Activated CD8-positive, alpha-beta T cell treated with anti-CD3 and anti-CD28 coated beads, Interleukin-2, amount 10 ng/mL, durations not matched to agents 7 days and 5 days (primary cell): ENCODE measurements at regions of chrX and their contacts with region 1.

Region 1: DNA sequence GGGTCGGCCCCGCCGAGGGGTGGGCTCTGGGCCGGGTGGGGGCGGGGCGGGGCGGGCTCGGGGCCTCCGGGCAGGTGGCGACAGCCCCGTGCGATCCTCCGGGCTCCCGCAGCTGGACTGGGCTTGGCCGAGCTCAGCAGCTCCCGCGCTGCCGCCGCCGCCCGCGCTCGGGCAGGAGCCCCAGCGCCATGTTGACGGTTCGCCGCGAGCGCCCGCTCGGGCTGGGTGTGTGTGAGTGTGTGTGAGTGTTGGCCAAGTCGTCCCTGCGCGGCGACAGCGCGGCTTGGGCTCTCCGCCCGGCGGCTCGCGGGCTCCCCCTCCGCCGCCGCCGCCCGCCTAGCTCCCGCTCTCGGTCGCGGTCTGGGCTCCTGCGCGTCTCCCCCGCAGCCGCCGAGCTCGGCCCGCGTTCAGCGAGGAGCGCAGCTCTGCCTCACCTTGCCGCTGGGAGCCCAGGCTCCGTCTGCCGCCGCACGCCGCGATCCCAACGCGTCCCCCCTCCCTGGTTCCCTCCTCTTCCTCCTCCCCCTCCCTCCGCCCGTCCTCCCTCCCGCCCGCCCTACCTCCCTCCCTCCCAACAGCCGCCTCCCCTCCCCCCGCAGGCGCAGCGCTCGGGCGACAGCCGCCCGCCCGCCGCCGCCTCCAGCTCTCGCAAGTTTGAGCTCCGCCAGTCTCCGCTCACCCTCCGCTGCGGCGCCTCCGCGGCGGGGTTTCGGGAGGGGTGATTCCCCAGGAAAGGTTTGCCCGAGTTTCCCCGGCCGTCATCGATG is at the start of gene BCOR:
- DNase-seq: peak; percentile 84
- ATAC-seq: peak; percentile 45
- H3K4me3 Mint-ChIP-seq: peak within 1 kb of the TSS; percentile 92
- H3K27ac Mint-ChIP-seq: peak within 1 kb of the TSS; percentile 92
- H3K4me1 Mint-ChIP-seq: peaks cover 22% of the 10 kb centered on the region
- H3K27me3 Mint-ChIP-seq: no peaks in the 10 kb centered on the region
- total RNA-seq, gene BCOR: 41.5 to 45.5 TPM

Region 2: DNA sequence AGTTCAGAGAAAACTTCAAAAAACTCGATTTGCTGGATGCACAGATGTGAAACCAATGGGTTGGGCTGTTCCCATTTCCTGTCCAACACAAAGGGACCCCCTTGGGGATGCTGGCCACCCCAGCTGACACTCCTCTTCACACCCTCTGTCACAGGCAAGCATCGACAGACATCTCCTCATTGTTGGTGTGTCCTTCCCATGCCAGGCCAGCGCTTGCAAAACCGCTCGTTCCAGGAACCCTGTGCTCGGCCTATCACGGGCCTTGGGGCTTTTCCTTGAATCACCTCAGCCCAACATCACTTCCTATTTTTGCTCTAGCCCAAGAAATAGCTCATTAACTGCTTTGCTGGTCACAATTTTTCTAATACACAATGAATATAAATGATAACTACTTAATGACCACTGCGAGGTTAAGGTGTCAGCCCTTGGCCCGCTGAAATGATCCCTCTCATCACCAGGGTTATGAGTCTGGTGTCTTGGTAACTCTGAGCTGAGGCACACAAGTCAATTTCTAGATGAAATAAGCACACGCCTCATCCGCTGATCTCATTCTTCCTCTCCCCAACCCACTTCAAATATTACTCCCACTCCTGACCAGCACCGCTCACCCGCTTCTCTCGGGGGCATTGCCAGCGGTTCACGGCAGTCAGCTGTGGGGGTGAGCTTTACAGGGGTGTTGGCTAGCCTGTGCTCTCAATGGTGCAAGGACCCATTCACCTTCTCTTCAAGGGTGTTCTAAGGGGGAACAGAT is 32.2 kb before region 1 on chrX:
- CTCF ChIA-PET with region 1: no interaction called
- POLR2A ChIA-PET with region 1: interaction called, 11 read pairs
- DNase-seq: peak; percentile 50
- ATAC-seq: peak; percentile 71
- H3K4me3 Mint-ChIP-seq: peak overlapping the region; percentile 62
- H3K27ac Mint-ChIP-seq: peak overlapping the region; percentile 90
- H3K4me1 Mint-ChIP-seq: peaks cover 91% of the 10 kb centered on the region
- H3K27me3 Mint-ChIP-seq: no peaks in the 10 kb centered on the region

Region 3: DNA sequence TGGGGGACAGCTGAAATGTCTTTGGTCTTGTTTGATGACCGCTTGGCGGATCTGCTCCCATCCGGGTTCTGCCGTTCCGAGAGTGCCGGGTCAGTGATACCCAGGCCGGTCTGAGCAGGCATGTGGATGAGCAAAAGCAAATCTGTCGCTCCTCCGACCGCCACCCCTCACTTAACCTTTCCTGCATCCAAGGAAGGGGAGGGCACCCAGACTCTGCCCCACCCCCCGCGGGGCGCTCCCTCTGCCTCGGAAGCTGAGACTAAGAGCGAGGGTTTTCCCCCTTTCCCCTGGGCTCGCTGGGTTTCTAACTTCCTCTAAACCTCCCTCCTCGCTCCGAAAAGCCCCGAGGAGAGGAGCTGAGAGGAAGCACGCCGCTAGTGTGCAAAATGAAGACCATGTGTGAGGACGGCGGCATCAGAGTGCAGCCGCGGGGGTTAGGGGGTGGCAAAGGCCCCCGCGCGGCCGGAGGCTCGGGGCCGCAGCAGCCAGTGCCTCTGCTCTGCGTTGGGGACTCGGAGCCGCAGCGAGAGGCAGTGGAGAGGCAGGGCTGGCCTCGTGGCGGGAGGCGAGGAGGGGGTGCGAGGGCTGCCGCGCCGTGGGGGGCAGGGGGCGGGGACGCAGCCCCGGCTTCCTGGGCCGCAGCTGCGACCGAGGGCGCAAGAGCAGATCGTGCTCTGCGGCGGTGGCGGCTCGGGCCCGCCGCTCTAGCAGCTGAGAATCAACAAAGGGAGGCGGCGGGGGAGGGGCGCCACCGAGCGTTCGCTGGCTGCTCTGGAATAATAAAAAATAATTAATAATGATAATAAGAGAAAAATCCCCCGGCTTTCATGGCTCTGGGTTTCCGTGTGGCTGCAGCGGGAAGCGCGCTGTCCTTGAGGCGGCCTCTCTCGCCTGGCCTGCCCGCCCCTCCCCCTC is 55.9 kb after region 1 on chrX:
- CTCF ChIA-PET with region 1: interaction called, 3 read pairs
- POLR2A ChIA-PET with region 1: interaction called, 31 read pairs
- DNase-seq: peak; percentile 64
- ATAC-seq: peak; percentile 31
- H3K4me3 Mint-ChIP-seq: peak overlapping the region; percentile 69
- H3K27ac Mint-ChIP-seq: no peak overlapping the region
- H3K4me1 Mint-ChIP-seq: peaks cover 27% of the 10 kb centered on the region
- H3K27me3 Mint-ChIP-seq: no peaks in the 10 kb centered on the region

Region 4: DNA sequence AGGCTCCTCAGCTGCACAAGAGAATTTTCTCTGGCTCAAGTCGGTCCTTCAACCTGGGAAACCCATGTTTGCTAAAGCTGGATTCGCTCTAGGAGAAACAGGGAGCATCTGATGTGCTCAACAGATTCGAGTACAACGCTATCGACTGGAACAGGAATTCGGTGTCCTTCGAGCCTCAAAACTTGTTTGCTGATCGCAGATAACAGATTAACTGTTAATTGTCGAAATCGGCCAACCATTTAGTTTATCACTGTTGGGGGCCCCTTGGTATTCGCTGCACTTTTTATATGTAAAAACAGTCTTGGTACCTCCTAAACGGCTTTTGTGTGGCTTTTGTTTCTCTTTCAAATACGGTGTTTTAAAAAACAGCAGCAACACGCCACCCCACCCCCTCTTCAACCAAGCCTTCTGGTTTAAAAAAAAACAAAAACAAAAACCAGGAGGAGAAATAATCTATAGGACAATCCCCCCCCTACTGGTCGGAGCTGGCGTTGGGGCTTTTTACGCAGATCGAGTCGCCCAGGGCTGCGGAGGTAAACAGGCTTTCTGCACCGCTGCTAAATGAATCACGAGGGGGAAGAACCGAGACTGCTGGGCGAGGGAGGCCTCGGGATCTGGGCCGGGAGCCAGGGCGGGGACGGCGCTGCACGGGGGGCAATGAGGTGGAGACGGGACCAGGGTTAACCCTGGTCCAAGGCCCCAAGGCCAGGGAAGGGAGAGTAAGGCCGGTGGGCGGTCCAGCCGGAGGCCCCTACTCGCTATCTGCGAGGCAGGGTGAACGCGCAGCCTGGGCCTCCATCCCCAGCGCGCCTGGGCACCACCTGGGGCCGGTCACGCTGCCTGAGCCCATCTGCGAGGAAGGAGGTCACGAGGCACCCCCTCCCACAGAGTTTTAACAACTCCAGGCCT is 71.8 kb after region 1 on chrX:
- CTCF ChIA-PET with region 1: interaction called, 3 read pairs
- POLR2A ChIA-PET with region 1: interaction called, 73 read pairs
- DNase-seq: peak; percentile 89
- ATAC-seq: peak; percentile 62
- H3K4me3 Mint-ChIP-seq: peak overlapping the region; percentile 78
- H3K27ac Mint-ChIP-seq: peak overlapping the region; percentile 96
- H3K4me1 Mint-ChIP-seq: peaks cover 67% of the 10 kb centered on the region
- H3K27me3 Mint-ChIP-seq: no peaks in the 10 kb centered on the region

Region 5: DNA sequence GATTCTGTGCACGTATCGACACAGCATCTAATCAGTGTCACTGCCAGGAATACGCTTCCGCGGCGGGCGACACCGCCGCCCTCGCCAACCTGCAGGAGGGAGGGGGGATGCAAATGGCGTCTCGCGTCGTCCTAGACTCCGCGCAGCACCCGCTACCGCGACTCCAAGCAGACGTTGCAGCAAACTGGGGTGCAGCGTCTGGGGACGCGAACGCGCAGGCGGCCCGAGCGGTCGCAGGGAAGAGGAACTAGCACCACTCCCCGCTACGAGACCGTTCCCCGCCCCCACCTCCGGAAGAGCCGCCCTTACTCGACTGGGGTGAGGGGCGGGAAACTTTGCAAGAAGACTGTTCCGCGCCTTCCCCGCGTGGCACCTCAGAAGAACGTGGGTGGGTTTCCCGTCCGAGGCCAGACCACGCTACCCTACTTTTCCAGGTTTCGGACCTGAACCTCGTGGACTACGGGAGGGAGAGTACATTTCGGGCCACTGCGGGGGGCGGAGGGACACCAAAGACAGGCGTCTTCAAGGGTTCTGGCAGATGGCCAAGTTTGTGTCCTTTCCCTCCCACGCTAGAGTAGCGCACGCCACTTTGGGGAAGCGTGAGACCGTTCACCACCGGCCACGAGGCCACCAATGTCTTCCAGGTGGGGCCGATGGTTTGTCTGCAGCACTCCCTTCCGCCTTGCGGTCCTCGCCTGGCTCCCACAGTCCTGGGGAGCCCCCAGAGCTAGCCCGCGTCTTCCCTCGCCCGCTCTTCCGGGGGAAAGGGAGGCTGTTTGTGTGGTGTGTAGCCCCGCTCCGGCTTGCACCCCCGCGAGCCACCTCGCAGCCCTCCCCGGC is 78.1 kb after region 1 on chrX:
- CTCF ChIA-PET with region 1: interaction called, 3 read pairs
- POLR2A ChIA-PET with region 1: interaction called, 73 read pairs
- DNase-seq: peak; percentile 79
- ATAC-seq: peak; percentile 40
- H3K4me3 Mint-ChIP-seq: peak overlapping the region; percentile 78
- H3K27ac Mint-ChIP-seq: peak overlapping the region; percentile 96
- H3K4me1 Mint-ChIP-seq: peaks cover 39% of the 10 kb centered on the region
- H3K27me3 Mint-ChIP-seq: no peaks in the 10 kb centered on the region

Region 6: GRCh38 chrX:40244980-40245379 is 147.3 kb after region 1 on chrX:
- CTCF ChIA-PET with region 1: no interaction called
- POLR2A ChIA-PET with region 1: no interaction called
- DNase-seq: peak; percentile 23
- ATAC-seq: peak; percentile 51
- H3K4me3 Mint-ChIP-seq: no peak overlapping the region
- H3K27ac Mint-ChIP-seq: no peak overlapping the region
- H3K4me1 Mint-ChIP-seq: peaks cover 13% of the 10 kb centered on the region
- H3K27me3 Mint-ChIP-seq: peaks cover 6% of the 10 kb centered on the region